Common myeloid progenitor, CD34-positive (primary cell): ENCODE measurements at regions of chr2 and their contacts with region 1.

Region 1: GRCh38 chr2:217785544-217786045 is 217.2 kb downstream of the TNS1 start:
- DNase-seq: peak; percentile 62 to 77 (median 67)
- H3K4me3 ChIP-seq: peak overlapping the region in 1 of 7 experiments; percentile 48
- H3K27ac ChIP-seq: no peak overlapping the region
- H3K4me1 ChIP-seq: peaks cover 0 to 20% (median 10%) of the 10 kb centered on the region in 4 experiments
- H3K27me3 ChIP-seq: no peaks in the 10 kb centered on the region

Region 2: GRCh38 chr2:217798743-217799562 is 13.4 kb after region 1 on chr2:
- CTCF ChIA-PET with region 1: interaction called, 157 read pairs
- POLR2A ChIA-PET with region 1: interaction called, 6 read pairs
- DNase-seq: peak; percentile 92 to 97 (median 96)
- H3K4me3 ChIP-seq: no peak overlapping the region
- H3K27ac ChIP-seq: peak overlapping the region; percentile 20 to 64
- H3K4me1 ChIP-seq: peaks cover 0 to 39% (median 32%) of the 10 kb centered on the region in 4 experiments
- H3K27me3 ChIP-seq: no peaks in the 10 kb centered on the region

Region 3: GRCh38 chr2:217886720-217887309 is 101.2 kb after region 1 on chr2:
- CTCF ChIA-PET with region 1: interaction called, 238 read pairs
- POLR2A ChIA-PET with region 1: no interaction called
- DNase-seq: peak; percentile 73 to 84 (median 75)
- H3K4me3 ChIP-seq: no peak overlapping the region
- H3K27ac ChIP-seq: no peak overlapping the region
- H3K4me1 ChIP-seq: no peaks in the 10 kb centered on the region
- H3K27me3 ChIP-seq: no peaks in the 10 kb centered on the region

Region 4: GRCh38 chr2:218003981-218004419 is 218.4 kb after region 1 on chr2:
- CTCF ChIA-PET with region 1: interaction called, 16 read pairs
- POLR2A ChIA-PET with region 1: no interaction called
- DNase-seq: no peak
- H3K4me3 ChIP-seq: no peak overlapping the region
- H3K27ac ChIP-seq: peak overlapping the region in 1 of 2 experiments; percentile 63
- H3K4me1 ChIP-seq: peaks cover 0 to 30% (median 19%) of the 10 kb centered on the region in 4 experiments
- H3K27me3 ChIP-seq: no peaks in the 10 kb centered on the region

Region 5: DNA sequence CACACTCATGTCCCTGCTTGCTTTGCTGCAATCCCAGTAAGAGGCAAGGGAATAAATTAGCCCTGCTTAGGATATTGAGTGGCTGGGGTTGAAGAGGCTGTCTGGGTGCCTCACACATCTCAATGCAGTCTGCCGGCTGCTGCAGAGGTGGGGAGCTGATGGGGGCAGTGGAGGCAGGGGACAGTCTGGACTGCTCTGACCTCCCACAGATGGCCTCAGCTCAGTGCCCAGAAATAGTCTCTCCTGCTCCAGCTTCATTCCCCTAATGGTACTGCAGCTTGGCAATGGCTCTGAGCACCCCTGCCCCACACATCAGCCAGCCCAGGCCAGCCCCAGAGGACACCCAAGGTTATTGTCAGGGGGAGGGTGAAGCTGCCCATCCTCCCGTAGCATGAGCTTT is 238.7 kb after region 1 on chr2:
- CTCF ChIA-PET with region 1: interaction called, 10 read pairs
- POLR2A ChIA-PET with region 1: no interaction called
- DNase-seq: no peak
- H3K4me3 ChIP-seq: no peak overlapping the region
- H3K27ac ChIP-seq: no peak overlapping the region
- H3K4me1 ChIP-seq: peaks cover 0 to 30% (median 19%) of the 10 kb centered on the region in 4 experiments
- H3K27me3 ChIP-seq: no peaks in the 10 kb centered on the region

Region 6: DNA sequence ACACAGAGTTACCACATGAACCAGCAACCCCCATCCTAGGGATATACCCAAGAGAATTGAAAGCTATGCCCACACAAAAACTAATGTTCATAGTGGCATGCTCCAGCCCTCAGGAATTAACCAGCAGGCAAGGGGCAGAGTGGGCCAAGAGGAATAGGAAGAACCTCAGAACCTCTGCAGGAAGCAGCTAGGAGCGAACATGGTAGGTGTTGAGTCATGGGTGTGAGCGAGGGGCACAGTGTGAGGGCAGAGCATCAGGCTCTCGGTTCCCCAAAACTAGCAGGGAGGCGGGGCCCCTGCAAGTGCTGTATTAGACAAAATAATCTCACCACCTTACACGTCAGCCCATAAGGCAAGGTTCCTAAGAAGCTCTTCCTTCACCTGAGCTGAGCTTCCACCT is 277.9 kb after region 1 on chr2:
- CTCF ChIA-PET with region 1: interaction called, 77 read pairs
- POLR2A ChIA-PET with region 1: no interaction called
- DNase-seq: peak; percentile 40 to 77 (median 71)
- H3K4me3 ChIP-seq: no peak overlapping the region
- H3K27ac ChIP-seq: no peak overlapping the region
- H3K4me1 ChIP-seq: peaks cover 4 to 25% (median 22%) of the 10 kb centered on the region in 4 experiments
- H3K27me3 ChIP-seq: peaks cover 0 to 2% (median 0%) of the 10 kb centered on the region in 5 experiments

Region 7: DNA sequence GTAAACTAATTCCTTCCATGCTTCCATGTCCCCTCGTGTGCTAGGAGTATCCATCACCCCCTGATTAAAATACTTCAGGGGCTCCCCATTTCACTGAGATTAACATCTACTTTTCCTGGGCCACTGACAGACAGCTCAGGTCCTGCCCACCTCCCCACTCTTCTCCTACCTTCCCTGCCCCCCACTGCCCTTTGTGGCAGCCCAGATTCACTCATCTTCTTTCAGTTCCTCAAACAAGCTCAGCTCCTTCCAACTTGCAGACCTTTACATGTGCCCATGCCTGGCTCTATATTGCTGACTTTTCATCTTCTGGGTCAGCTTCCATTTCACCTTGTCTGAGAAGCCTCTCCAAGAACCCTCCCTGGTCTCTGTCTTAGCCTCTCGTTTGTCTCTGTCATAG is 295.5 kb after region 1 on chr2:
- CTCF ChIA-PET with region 1: interaction called, 16 read pairs
- POLR2A ChIA-PET with region 1: no interaction called
- DNase-seq: no peak
- H3K4me3 ChIP-seq: no peak overlapping the region
- H3K27ac ChIP-seq: no peak overlapping the region
- H3K4me1 ChIP-seq: no peaks in the 10 kb centered on the region
- H3K27me3 ChIP-seq: no peaks in the 10 kb centered on the region